H1 (cell line): ENCODE measurements at regions of chr15 and their contacts with region 1.

Region 1: DNA sequence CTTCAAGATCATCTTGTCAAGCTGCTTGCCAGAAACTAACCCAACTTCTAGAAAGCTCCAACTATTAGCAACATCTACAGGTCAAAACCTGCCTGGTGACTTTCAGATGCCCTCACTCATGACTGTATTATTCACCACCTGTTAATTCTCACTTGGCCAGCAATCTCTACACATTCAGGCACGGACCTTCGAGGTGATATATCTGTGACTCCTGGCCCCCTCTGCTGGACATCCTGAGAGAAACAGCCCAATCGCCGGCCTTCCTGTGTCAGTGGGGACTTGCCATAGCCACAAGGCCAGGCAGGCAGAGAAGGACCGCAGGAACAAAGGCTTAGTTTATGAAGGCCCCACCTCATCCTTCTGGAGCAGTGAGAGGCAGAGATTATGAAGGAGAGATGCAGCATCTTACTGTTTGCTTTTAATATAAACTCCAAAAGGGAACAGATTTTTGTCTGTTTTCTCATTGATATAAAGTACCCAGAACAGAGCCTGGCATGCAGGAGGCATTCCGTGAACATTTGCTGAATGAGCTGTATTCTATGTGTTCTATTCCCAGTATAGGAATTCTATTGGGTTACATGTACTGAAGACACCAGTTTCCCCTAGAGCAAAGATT is 24.4 kb upstream of the OCA2 start:
- DNase-seq: peak; percentile 29 to 85
- H3K4me3 ChIP-seq: no peak overlapping the region
- H3K27ac ChIP-seq: no peak overlapping the region
- H3K4me1 ChIP-seq: no peaks in the 10 kb centered on the region
- H3K27me3 ChIP-seq: no peaks in the 10 kb centered on the region
- CTCF ChIP-seq: peak; percentile 71 to 81 (median 76)
- EP300 ChIP-seq: no peak
- POLR2A ChIP-seq: no peak
- RAD21 ChIP-seq: peak; percentile 64 to 75

Region 2: GRCh38 chr15:28051955-28052633 is 71.4 kb before region 1 on chr15:
- CTCF ChIA-PET with region 1: no interaction called
- POLR2A ChIA-PET with region 1: no interaction called
- DNase-seq: no peak
- H3K4me3 ChIP-seq: no peak overlapping the region
- H3K27ac ChIP-seq: no peak overlapping the region
- H3K4me1 ChIP-seq: no peaks in the 10 kb centered on the region
- H3K27me3 ChIP-seq: no peaks in the 10 kb centered on the region
- CTCF ChIP-seq: no peak
- EP300 ChIP-seq: no peak
- POLR2A ChIP-seq: no peak
- RAD21 ChIP-seq: no peak

Region 3: DNA sequence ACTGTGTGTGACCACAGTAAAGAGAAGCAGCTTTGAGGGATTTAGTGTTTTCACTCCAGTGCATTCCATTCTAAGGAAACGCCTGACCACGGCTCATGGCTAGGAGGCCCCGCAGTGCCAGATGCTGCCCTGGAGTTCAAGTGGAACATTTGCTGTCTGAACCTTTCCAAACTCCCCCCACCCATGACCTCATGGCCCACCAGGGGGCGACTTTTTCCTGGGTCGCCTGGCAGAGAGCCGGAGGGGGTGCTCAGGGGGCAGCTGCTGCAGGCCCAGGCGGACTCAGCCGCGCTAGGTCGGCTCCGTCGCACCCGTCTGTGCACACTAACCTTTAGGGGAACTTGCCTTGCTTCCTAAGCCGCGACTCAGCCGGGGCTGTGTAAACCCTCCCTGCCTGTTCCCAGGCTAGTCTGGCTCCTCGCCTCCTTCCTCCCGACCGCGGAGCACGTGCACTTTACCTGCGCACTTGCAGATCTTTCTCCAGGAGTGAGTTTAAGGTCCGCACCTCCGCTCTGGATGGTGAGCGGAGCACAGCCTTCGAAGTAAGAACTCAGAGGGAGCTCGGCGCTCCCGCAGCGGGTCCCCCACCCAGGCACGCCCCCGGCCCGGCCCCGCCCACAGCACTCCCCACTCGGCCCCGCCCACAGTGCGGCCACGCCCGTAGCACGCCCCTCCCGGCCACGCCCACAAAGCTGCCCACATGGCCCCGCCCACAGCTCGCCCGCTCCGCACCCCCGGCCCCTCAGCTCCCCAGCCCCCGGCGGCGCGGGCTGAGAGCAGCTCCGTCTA is 24.6 kb before region 1 on chr15 and contains the start of gene OCA2:
- CTCF ChIA-PET with region 1: interaction called, 16 read pairs
- POLR2A ChIA-PET with region 1: no interaction called
- DNase-seq: peak in 1 of 2 experiments; percentile 99
- H3K4me3 ChIP-seq: peak within 1 kb of the TSS; percentile 16 to 54 (median 34); a peak in 6 of 8 replicates
- H3K27ac ChIP-seq: no peak within 1 kb of the TSS
- H3K4me1 ChIP-seq: peaks cover 0 to 26% (median 10%) of the 10 kb centered on the region in 4 experiments; a peak in 6 of 7 replicates
- H3K27me3 ChIP-seq: peaks cover 38 to 82% (median 70%) of the 10 kb centered on the region in 4 experiments
- CTCF ChIP-seq: peak in 2 of 3 experiments; percentile 34 to 42; a peak in 3 of 4 replicates
- EP300 ChIP-seq: no peak
- POLR2A ChIP-seq: no peak
- RAD21 ChIP-seq: peak in 1 of 2 experiments; percentile 31; a peak in 2 of 4 replicates
- total RNA-seq, gene OCA2: 0.20 and 0.57 TPM in 2 replicates

Region 4: GRCh38 chr15:28106294-28107110 is 17.0 kb before region 1 on chr15:
- CTCF ChIA-PET with region 1: interaction called, 15 read pairs
- POLR2A ChIA-PET with region 1: no interaction called
- DNase-seq: no peak
- H3K4me3 ChIP-seq: peak overlapping the region; percentile 56 to 72 (median 59)
- H3K27ac ChIP-seq: no peak overlapping the region
- H3K4me1 ChIP-seq: peaks cover 0 to 7% (median 2%) of the 10 kb centered on the region in 4 experiments; a peak in 3 of 7 replicates
- H3K27me3 ChIP-seq: peaks cover 9 to 37% (median 27%) of the 10 kb centered on the region in 4 experiments; a peak in 6 of 7 replicates
- CTCF ChIP-seq: no peak
- EP300 ChIP-seq: no peak
- POLR2A ChIP-seq: no peak
- RAD21 ChIP-seq: no peak